Activated CD4-positive, alpha-beta T cell treated with anti-CD3 and anti-CD28 coated beads, Interleukin-2, amount 10 ng/mL, durations not matched to agents 7 days and 5 days (primary cell): ENCODE measurements at regions of chr17 and their contacts with region 1.

Region 1: GRCh38 chr17:63848834-63849700 is 6.6 kb upstream of the SMARCD2 start:
- DNase-seq: peak; percentile 94
- H3K4me3 Mint-ChIP-seq: peak overlapping the region; percentile 68
- H3K27ac Mint-ChIP-seq: peak overlapping the region; percentile 98
- H3K4me1 Mint-ChIP-seq: peaks cover 25% of the 10 kb centered on the region
- H3K27me3 Mint-ChIP-seq: peaks cover 11% of the 10 kb centered on the region

Region 2: DNA sequence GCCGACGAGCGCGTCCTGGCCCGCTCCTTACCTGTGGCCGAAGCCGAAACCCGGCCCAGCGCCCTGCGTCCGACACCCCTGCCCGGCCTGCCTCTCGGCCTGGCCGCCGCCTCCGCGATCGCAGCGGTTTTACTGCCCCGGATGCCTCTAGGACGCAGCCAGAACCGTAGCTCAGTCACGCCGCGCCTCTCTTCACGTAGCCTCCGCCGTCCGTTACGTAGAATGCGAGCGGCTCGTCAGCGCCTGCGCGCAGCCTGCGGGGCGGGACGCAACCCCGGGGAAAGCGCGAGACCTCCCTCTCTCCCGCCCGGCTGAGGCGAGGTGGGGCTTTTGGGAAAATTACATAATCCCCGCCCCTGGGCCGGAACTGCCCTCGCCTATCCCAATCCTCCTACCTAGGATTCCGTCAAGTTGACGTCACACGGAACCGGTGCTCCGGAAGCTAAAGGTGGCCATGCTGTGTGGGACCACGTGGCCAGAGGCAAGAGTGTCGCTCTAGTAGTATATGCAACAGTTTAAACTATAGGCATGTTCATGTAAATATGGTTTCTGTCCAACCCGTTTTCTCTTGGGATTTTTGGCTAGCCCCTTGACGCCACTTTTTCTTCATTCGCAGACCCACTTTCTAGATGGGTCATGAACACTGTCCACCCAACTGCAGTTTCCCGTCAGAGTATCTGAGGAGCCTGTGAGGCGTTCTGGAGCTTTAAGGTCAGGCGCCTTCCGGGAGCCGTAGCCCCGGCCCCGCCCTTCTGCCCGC is 75.5 kb before region 1 on chr17 and contains the start of gene CCDC47:
- CTCF ChIA-PET with region 1: interaction called, 10 read pairs
- POLR2A ChIA-PET with region 1: no interaction called
- DNase-seq: peak; percentile 99
- H3K4me3 Mint-ChIP-seq: peak within 1 kb of the TSS; percentile 90
- H3K27ac Mint-ChIP-seq: peak within 1 kb of the TSS; percentile 99
- H3K4me1 Mint-ChIP-seq: peaks cover 55% of the 10 kb centered on the region
- H3K27me3 Mint-ChIP-seq: no peaks in the 10 kb centered on the region
- total RNA-seq, gene CCDC47: 59.2 to 65.4 TPM

Region 3: DNA sequence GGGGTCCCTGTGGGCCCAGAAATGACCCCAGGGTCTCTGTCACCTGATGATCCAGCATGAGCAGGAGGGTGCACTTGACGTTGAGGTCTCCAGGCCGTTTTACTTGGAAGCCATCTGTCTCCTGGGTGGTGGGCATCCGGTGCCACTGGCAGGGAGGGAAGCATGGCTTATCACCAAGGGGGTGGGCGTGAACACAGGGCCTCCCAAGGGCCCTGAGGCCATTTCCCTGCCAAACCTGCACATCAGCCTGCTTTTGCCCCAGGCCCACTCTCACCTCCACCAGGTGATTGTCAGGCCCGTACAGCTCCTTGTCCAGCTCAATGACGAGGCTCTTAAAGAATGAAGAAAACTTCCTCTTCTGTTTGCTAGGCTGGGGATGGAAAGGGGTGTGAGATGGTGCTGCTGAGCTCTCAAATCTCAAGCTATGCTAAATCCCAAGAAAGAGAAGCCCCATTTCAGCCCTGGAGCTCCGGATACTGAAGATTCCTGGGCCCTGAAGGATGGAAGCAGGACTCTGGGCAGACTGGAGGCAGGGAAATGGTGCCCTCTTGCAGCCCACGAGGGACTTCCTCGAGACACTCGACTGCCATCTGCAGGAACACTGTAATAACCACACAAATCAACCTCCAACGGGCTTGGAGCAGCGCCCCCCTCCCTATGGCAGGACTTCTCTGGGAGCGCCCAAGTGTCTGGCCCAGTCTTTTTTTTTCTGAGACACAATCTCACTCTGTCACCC is 14.5 kb before region 1 on chr17:
- CTCF ChIA-PET with region 1: interaction called, 47 read pairs
- POLR2A ChIA-PET with region 1: no interaction called
- DNase-seq: peak; percentile 73
- H3K4me3 Mint-ChIP-seq: no peak overlapping the region
- H3K27ac Mint-ChIP-seq: peak overlapping the region; percentile 16
- H3K4me1 Mint-ChIP-seq: peaks cover 57% of the 10 kb centered on the region
- H3K27me3 Mint-ChIP-seq: no peaks in the 10 kb centered on the region

Region 4: GRCh38 chr17:63859257-63859656 is 10.2 kb after region 1 on chr17:
- CTCF ChIA-PET with region 1: interaction called, 54 read pairs
- POLR2A ChIA-PET with region 1: no interaction called
- DNase-seq: no peak
- H3K4me3 Mint-ChIP-seq: no peak overlapping the region
- H3K27ac Mint-ChIP-seq: no peak overlapping the region
- H3K4me1 Mint-ChIP-seq: no peaks in the 10 kb centered on the region
- H3K27me3 Mint-ChIP-seq: peaks cover 29% of the 10 kb centered on the region